ENCODE measurements at regions of chr1 and their contacts with region 1.

Region 1: DNA sequence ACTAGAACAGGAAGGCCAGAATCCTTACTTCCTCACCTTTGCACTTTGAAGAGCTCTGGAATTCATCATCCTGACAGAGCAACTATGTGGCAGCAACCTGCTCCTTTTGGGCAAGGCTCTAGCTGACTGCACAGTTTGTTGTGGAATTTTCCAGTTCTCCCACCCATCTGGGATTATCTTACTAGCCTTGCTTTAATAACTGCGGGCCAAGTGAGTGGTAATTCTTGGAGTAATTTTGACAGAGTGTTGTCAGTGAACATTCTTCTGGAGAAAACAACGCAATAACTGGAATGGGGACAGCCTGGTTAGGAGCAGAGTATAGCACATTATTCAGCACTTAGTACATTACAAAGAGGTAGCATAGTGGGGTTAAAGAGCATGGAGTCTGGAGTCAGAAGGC is 75.3 kb downstream of the NTMT2 start:
- DNase-seq: no peak
- H3K4me3 ChIP-seq: no peak overlapping the region
- H3K27ac ChIP-seq: peak overlapping the region; percentile 65 to 78 (median 68)
- H3K4me1 ChIP-seq: peaks cover 25 to 83% (median 49%) of the 10 kb centered on the region in 4 donors
- H3K27me3 ChIP-seq: no peaks in the 10 kb centered on the region
- CTCF ChIP-seq: no peak
- EP300 ChIP-seq: peak; percentile 3
- POLR2A ChIP-seq: no peak

Region 2: GRCh38 chr1:170402476-170403311 is 181.7 kb after region 1 on chr1:
- intact Hi-C with region 1: loop called (anchors 10 kb)
- DNase-seq: no peak
- H3K4me3 ChIP-seq: no peak overlapping the region
- H3K27ac ChIP-seq: peak overlapping the region in 1 of 4 donors; percentile 4
- H3K4me1 ChIP-seq: peaks cover 0 to 5% (median 0%) of the 10 kb centered on the region in 4 donors
- H3K27me3 ChIP-seq: no peaks in the 10 kb centered on the region
- CTCF ChIP-seq: no peak
- EP300 ChIP-seq: no peak
- POLR2A ChIP-seq: no peak